A673 (cell line): ENCODE measurements at regions of chr19 and their contacts with region 1.

Region 1: DNA sequence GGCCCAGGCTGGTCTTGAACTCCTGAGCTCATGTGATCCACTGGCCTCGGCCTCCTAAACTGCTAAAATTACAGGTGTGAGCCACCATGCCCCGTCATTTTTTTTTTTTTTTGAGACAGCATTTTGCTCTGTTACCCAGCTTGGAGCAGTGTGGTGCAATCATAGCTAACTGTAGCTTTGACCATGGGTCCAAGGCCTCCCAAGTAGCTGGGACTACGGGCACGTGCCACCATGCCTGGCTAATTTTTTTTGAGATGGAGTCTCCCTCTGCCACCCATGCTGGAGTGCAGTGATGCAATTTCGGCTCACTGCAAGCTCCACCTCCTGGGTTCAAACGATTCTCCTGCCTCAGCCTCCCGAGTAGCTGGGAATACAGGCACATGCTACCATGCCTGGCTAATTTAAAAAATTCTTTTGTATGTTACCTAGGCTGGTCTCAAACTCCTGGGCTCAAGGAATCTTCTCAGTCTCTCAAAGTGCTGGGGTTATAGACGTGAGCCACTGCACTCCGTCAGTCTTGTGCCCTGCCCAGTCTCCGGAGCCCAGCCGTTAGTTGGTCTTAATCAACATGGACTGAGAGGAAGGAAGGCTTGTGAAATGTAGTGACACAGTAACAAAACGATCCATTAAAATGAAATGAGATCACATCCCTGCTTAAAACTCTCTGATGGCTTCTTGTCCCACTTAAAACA is 1.4 kb upstream of the LRG1 start:
- DNase-seq: no peak
- H3K4me3 ChIP-seq: no peak overlapping the region
- H3K27ac ChIP-seq: no peak overlapping the region
- H3K4me1 ChIP-seq: peaks cover 7% of the 10 kb centered on the region
- H3K27me3 ChIP-seq: no peaks in the 10 kb centered on the region
- CTCF ChIP-seq: no peak

Region 2: DNA sequence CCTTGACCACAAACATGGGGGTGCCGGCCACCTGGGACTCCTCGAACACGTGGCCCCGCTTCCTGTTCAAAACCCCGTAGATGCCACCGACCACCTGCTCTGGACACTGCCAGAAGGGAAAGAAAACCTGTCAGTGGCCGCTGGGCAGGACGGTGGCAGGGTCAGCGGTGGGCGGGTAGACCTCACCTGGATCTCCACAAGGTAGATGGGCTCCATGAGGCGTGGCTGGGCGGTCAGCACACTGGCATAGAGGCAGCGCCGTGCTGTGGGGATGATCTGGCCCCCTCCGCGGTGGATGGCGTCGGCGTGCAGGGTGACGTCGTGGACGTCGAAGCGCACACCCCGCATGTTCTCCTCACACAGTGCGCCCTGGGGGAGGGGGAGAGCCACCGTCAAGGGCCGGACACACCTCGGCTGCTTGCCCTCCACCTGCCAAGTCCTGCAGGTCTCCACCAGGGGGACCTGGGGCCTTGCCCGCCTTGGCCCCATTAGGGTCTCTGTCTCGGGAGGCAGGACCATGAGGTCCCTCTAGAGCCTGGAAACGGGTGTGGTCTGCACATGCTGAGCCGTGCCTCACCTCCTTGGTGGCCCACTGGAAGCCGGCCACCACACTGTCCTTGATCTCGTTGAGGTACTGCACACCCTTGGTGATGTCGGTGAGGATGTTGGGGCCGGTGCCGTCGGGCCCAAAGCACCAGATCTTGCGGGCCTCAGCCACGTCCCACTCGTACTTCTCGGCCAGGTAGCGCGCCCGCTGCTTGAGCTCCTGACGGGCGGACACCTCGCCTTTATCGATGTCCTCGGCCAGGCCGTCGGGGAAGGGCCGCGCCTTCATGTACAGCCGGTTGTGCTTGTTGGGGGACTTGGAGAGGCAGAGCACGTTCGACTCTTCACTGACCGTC is 563.8 kb before region 1 on chr19:
- CTCF ChIA-PET with region 1: no interaction called
- POLR2A ChIA-PET with region 1: no interaction called
- intact Hi-C with region 1: no loop called
- DNase-seq: no peak
- H3K4me3 ChIP-seq: no peak overlapping the region
- H3K27ac ChIP-seq: no peak overlapping the region
- H3K4me1 ChIP-seq: peaks cover 10% of the 10 kb centered on the region
- H3K27me3 ChIP-seq: no peaks in the 10 kb centered on the region
- CTCF ChIP-seq: no peak

Region 3: DNA sequence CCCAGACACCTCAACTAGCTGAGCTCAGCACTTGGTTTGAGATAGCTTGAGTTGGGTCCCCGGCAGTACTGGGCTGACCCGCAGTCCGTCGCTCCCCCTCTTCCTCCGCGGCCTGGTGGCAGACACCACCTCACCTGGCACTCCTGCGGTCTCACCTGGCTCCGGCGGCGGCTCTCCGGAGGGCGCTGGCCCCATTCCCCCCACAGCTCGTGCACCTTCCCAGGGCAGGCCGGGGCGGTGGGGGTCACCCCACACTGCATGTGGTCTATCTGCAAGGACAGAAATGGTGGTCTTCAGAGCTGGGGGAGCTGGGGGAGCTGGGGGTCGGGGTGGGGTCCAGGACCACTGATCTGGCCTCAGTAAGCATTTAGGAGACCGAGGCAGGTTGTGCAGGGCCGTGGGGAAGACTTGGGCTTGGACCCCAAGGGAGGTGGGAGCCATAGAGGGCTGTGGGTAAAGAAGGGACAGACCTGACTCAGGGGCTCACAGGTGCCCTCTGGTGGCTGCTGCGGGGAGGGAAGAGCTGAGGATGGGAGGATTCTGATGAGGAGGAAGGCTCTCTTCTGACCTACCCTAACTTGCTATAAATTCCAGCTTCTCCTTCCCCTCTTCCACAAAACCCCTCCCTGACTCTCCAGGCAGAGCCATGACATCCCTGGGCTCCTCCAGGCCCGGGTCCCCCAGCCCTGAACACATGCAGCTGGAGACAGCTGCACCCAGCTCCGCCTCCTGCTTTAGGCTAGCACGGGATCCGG is 16.3 kb before region 1 on chr19:
- CTCF ChIA-PET with region 1: no interaction called
- POLR2A ChIA-PET with region 1: interaction called, 14 read pairs
- intact Hi-C with region 1: no loop called
- DNase-seq: peak; percentile 63
- H3K4me3 ChIP-seq: no peak overlapping the region
- H3K27ac ChIP-seq: no peak overlapping the region
- H3K4me1 ChIP-seq: no peaks in the 10 kb centered on the region
- H3K27me3 ChIP-seq: no peaks in the 10 kb centered on the region
- CTCF ChIP-seq: peak; percentile 76